ENCODE measurements at regions of chr6 and their contacts with region 1.

Region 1: DNA sequence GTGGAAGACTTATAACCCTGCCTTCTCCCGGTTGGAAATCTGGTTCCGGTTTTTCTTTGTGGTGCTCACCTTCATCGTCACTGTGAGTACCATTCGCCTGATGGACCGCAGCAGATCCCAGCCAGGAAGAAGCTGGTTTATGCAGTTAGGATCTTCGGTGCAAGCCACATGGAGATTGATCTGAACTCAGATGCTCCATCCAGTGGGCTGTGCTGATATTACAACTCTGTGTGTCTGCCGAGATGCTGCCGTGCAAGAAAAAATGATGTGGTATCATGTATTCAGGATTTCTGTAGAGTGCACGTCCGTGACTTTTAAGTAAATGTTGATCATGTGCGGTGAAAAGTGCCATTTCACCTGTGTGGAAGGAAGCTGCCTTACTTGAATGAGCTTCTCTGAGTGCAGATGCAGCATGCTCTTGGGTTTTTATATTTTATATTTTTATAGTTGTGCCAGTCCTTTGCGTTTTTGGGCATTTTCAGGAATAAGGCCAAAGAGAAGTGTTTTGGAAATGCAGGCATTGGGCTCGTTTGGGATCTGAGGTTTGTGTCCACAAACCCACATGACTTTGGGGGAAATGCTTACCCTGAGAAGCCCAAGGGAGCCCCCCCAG is 39.2 kb downstream of the DYNLT1 start:
- DNase-seq: peak in 8 of 9 donors; percentile 31 to 57 (median 44)
- ATAC-seq: peak; percentile 85
- H3K4me3 ChIP-seq: no peak overlapping the region
- H3K4me3 Mint-ChIP-seq: no peak overlapping the region
- H3K27ac ChIP-seq: no peak overlapping the region
- H3K27ac Mint-ChIP-seq: peak overlapping the region in 8 of 9 donors; percentile 5 to 83 (median 66)
- H3K4me1 ChIP-seq: no peaks in the 10 kb centered on the region
- H3K4me1 Mint-ChIP-seq: peaks cover 0 to 19% (median 7%) of the 10 kb centered on the region in 7 donors
- H3K27me3 ChIP-seq: no peaks in the 10 kb centered on the region
- H3K27me3 Mint-ChIP-seq: no peaks in the 10 kb centered on the region

Region 2: DNA sequence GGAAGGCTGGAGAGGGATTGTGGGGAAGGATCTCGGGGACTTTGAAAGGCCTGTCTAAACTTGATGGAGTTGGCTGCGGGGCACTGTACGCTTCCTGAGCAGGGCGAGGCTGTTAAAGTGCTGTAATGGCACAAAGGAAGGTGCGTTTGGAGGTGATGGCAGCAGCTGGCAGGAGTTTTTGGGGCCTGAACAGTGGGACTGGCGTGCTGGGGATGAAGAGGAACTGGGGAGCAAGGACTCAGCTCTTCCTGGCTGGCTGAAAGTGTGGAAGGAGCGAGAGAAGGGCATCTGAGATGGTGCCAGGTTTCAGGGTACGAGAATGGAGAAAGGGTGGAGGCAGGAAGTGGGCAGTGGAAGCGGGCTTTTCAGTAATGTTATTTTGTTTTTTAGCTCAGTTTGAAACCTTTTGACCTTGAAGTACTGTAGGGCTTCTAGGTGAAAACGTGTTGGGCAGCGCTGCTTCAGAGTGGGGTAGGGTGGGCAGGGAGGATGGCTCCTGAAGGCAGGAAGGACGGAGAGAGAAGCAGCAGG is 37.4 kb before region 1 on chr6:
- CTCF ChIA-PET with region 1: interaction called, 10 read pairs
- POLR2A ChIA-PET with region 1: interaction called, 3 read pairs
- intact Hi-C with region 1: no loop called
- DNase-seq: peak in 5 of 9 donors; percentile 13 to 24 (median 21)
- ATAC-seq: peak; percentile 26
- H3K4me3 ChIP-seq: peak overlapping the region; percentile 28
- H3K4me3 Mint-ChIP-seq: peak overlapping the region; percentile 61 to 85 (median 78)
- H3K27ac ChIP-seq: peak overlapping the region; percentile 43
- H3K27ac Mint-ChIP-seq: peak overlapping the region; percentile 80 to 97 (median 89)
- H3K4me1 ChIP-seq: peaks cover 24 to 63% of the 10 kb centered on the region in 2 donors
- H3K4me1 Mint-ChIP-seq: peaks cover 62 to 88% (median 68%) of the 10 kb centered on the region in 7 donors
- H3K27me3 ChIP-seq: no peaks in the 10 kb centered on the region
- H3K27me3 Mint-ChIP-seq: no peaks in the 10 kb centered on the region

Region 3: GRCh38 chr6:158955255-158955654 is 349.9 kb after region 1 on chr6:
- CTCF ChIA-PET with region 1: no interaction called
- POLR2A ChIA-PET with region 1: no interaction called
- intact Hi-C with region 1: no loop called
- DNase-seq: peak in 1 of 9 donors; percentile 34
- ATAC-seq: no peak
- H3K4me3 ChIP-seq: no peak overlapping the region
- H3K4me3 Mint-ChIP-seq: peak overlapping the region in 2 of 10 donors; percentile 0 to 42
- H3K27ac ChIP-seq: no peak overlapping the region
- H3K27ac Mint-ChIP-seq: peak overlapping the region in 3 of 9 donors; percentile 8 to 80 (median 14)
- H3K4me1 ChIP-seq: no peaks in the 10 kb centered on the region
- H3K4me1 Mint-ChIP-seq: peaks cover 0 to 13% (median 0%) of the 10 kb centered on the region in 7 donors
- H3K27me3 ChIP-seq: no peaks in the 10 kb centered on the region
- H3K27me3 Mint-ChIP-seq: peaks cover 0 to 18% (median 0%) of the 10 kb centered on the region in 5 donors